ENCODE measurements at regions of chr22 and their contacts with region 1.

Region 1: DNA sequence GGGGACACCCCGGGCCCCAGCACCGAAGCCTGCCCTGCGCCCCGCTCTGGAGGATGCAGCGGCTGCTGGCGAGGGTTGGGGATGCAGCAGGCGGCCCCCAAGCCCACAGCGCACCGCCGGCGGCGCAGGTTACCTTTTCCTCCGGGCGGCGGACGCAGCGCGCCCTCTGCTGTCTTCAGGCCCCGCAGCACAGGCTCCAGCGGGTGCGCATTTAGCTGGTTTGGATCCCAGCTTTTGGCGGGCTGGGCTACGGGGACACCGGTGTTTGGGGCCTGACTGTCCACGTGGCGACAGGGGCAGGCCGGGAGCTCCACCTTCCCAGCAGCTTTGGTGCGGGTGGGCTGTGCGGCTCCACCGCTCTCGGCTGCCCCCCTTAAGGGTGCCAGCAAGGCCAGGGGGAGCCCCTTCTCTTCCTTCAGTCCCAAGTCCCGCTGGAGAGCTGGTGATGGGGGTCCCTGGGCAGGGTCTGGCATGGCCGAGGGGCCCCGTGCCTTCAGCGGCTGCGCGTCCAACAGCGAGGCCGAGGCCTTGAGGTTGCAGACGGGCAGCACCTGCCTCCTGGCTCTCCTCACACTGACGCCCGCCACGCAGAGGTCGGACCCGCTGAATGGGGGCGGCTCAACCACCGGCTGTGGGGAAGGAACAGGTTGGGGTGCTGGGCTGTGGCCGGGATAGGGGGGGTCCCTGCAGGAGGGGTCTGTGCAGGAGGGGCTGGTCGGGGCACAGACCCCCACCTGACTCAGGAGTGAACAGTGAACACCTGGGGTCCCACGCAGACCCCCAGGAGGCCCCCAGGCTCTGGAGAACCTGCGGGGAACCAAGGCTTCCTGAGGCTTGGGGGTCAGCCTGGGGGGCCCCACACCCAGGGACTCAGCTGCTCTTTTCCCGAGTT is 18.0 kb upstream of the IL17REL start:
- DNase-seq: peak; percentile 79
- H3K4me3 Mint-ChIP-seq: no peak overlapping the region
- H3K27ac Mint-ChIP-seq: no peak overlapping the region
- H3K4me1 Mint-ChIP-seq: peaks cover 11% of the 10 kb centered on the region
- H3K27me3 Mint-ChIP-seq: no peaks in the 10 kb centered on the region
- CTCF ChIP-seq: peak; percentile 91

Region 2: DNA sequence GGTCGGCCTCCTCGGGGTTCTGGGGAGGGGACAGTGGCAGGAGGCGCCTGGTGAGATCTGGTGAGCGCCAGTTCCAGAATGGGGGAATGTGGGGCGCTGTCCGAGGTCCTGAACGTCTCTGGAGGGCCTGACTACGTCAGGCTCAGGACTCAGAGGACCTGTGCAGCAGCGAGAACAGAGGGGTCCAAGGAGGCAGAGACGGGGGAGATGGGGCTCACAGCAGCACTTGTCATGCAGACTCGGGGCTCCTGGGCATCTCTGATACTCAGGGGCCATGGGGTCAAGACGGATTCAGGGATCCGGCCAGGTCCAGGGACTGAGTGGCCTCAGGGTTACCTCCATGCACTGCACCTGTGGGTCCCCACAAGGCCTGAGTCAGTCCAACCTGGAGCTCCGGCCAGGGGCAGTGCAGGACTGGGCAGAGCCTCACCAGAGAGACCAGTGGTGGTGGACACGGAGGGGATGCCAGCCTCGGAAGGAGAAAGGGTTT is 295.1 kb before region 1 on chr22:
- CTCF ChIA-PET with region 1: no interaction called
- POLR2A ChIA-PET with region 1: no interaction called
- intact Hi-C with region 1: no loop called
- DNase-seq: no peak
- H3K4me3 Mint-ChIP-seq: no peak overlapping the region
- H3K27ac Mint-ChIP-seq: no peak overlapping the region
- H3K4me1 Mint-ChIP-seq: no peaks in the 10 kb centered on the region
- H3K27me3 Mint-ChIP-seq: no peaks in the 10 kb centered on the region
- CTCF ChIP-seq: no peak

Region 3: GRCh38 chr22:49767355-49768062 is 263.0 kb before region 1 on chr22:
- CTCF ChIA-PET with region 1: no interaction called
- POLR2A ChIA-PET with region 1: interaction called, 4 read pairs
- intact Hi-C with region 1: loop called (anchors 2 kb)
- DNase-seq: peak; percentile 55
- H3K4me3 Mint-ChIP-seq: no peak overlapping the region
- H3K27ac Mint-ChIP-seq: no peak overlapping the region
- H3K4me1 Mint-ChIP-seq: no peaks in the 10 kb centered on the region
- H3K27me3 Mint-ChIP-seq: no peaks in the 10 kb centered on the region
- CTCF ChIP-seq: peak; percentile 65

Region 4: GRCh38 chr22:49930739-49931412 is 99.7 kb before region 1 on chr22:
- CTCF ChIA-PET with region 1: interaction called, 48 read pairs
- POLR2A ChIA-PET with region 1: interaction called, 12 read pairs
- intact Hi-C with region 1: no loop called
- DNase-seq: peak; percentile 83
- H3K4me3 Mint-ChIP-seq: no peak overlapping the region
- H3K27ac Mint-ChIP-seq: no peak overlapping the region
- H3K4me1 Mint-ChIP-seq: peaks cover 12% of the 10 kb centered on the region
- H3K27me3 Mint-ChIP-seq: no peaks in the 10 kb centered on the region
- CTCF ChIP-seq: peak; percentile 13

Region 5: DNA sequence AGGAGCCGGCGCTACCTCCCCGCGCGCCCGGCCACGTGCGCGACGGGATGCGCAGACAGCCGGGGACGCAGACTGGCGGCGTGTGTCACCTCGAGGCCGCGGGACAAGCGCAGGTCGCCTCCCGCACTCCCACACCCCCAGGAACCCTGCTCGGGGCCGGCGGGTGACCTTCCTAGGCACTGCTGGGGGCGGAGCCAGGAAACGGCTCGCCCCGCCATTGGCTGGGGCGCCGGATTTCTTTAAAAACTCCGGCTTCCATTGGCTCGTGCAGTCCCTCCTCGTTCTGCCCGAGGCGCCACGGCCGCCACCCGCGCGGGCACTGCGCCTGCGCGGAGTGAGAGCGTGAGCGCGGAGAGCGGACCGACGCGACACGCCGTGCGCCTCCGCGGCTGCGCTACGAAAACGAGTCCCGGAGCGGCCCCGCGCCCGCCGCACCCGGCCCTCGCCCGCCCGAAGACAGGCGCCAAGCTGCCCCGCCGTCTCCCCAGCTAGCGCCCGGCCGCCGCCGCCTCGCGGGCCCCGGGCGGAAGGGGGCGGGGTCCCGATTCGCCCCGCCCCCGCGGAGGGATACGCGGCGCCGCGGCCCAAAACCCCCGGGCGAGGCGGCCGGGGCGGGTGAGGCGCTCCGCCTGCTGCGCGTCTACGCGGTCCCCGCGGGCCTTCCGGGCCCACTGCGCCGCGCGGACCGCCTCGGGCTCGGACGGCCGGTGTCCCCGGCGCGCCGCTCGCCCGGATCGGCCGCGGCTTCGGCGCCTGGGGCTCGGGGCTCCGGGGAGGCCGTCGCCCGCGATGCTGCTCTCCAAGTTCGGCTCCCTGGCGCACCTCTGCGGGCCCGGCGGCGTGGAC is 70.2 kb before region 1 on chr22 and contains the start of gene PIM3:
- CTCF ChIA-PET with region 1: interaction called, 6 read pairs
- POLR2A ChIA-PET with region 1: interaction called, 25 read pairs
- intact Hi-C with region 1: no loop called
- DNase-seq: peak; percentile 96
- H3K4me3 Mint-ChIP-seq: peak within 1 kb of the TSS; percentile 90
- H3K27ac Mint-ChIP-seq: peak within 1 kb of the TSS; percentile 77
- H3K4me1 Mint-ChIP-seq: peaks cover 19% of the 10 kb centered on the region
- H3K27me3 Mint-ChIP-seq: no peaks in the 10 kb centered on the region
- CTCF ChIP-seq: no peak
- total RNA-seq, gene PIM3: 56.3 and 73.5 TPM in 2 replicates

Region 6: DNA sequence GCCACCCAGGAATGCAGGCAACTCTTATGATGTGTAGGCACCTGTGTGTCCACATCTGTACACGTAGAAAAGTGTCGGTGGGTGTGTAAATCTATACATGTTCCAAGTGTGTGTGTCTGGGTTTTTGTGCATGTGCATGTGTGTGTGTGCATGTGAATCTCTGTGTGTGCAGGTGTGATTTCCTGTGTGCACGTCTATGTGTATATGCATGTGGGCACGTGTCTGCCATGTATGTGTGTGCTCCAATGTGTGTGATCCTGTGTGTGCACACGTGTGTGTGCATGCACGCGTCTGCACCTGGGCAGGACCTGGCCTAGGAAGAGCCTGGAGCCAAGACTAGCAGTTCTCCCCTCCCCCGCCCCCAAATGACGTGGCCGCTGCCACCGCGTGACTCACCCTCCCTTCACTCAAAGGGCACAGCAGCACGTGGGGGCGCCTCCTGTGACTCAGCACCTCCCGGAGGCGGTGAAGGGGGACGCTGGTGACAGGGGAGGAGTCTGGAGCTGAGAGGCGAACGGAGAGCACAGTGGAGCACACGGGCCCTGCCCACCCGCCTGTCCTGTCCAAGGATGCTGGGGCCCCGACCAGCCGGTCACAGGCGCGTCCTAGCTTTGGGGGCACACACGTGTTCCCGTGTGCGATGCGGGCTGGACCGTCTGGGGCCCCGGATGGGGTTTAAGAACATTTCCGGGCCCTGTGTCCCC is 59.9 kb before region 1 on chr22:
- CTCF ChIA-PET with region 1: interaction called, 6 read pairs
- POLR2A ChIA-PET with region 1: interaction called, 5 read pairs
- intact Hi-C with region 1: loop called (anchors 5 kb)
- DNase-seq: peak; percentile 98
- H3K4me3 Mint-ChIP-seq: peak overlapping the region; percentile 69
- H3K27ac Mint-ChIP-seq: peak overlapping the region; percentile 72
- H3K4me1 Mint-ChIP-seq: peaks cover 15% of the 10 kb centered on the region
- H3K27me3 Mint-ChIP-seq: no peaks in the 10 kb centered on the region
- CTCF ChIP-seq: no peak

Region 7: DNA sequence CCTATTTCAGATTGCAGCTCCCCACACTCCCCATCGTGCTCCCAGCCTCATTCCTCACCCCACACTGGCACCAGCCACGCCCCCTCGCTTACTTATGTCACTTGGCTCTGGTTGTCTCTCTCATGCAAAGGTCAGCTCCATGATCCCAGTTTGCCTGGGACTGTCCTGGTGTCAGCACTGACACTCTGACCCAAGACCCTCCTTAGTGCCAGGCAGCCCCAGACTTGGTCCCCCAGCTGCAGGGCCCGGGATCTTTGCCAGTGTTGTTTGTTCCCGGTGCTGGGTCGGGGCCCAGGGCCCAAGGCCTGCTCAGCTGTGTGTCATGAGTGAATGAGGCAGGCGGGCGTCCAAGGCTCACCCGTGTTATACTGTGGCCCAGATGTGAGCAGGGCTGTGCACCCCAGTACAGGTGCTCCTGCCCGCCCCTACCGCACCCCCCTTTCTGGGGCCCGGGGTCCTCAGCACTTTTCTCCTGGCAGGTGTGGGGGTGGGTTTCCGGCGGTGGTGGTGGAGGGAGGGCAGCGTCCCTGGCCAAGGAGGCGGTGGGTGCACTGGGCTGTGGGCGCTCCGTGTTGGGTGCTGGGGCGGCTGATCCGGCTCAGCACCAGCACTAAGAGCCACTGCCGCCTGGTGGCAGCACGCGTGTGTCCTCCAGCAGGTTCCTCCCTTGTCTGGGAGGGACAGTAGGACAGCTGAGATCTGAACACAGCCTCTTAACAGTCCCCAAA is 37.5 kb before region 1 on chr22:
- CTCF ChIA-PET with region 1: interaction called, 9 read pairs
- POLR2A ChIA-PET with region 1: interaction called, 3 read pairs
- intact Hi-C with region 1: loop called (anchors 1 kb)
- DNase-seq: peak; percentile 65
- H3K4me3 Mint-ChIP-seq: no peak overlapping the region
- H3K27ac Mint-ChIP-seq: no peak overlapping the region
- H3K4me1 Mint-ChIP-seq: peaks cover 14% of the 10 kb centered on the region
- H3K27me3 Mint-ChIP-seq: peaks cover 14% of the 10 kb centered on the region
- CTCF ChIP-seq: peak; percentile 77

Region 8: DNA sequence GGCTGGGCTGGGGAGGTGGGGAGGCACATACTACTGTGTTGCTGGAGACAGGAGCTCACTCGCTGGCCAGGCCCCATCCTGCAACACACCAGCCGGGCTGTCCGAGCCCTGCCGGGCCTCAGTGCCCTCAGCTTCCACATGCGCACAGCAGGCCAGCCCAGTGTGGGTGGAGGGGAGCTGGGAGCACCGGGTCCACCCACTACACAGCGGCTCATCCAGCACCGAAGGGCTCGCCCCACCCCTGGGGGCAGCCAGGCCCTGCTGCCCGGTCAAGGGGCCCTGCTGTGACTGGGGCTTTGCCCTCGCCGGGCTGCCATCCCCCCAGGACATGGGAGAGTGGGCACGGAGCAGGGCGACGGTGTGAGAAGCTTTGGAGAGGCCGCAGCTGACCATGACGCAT is 18.3 kb after region 1 on chr22:
- CTCF ChIA-PET with region 1: interaction called, 10 read pairs
- POLR2A ChIA-PET with region 1: no interaction called
- intact Hi-C with region 1: no loop called
- DNase-seq: no peak
- H3K4me3 Mint-ChIP-seq: no peak overlapping the region
- H3K27ac Mint-ChIP-seq: no peak overlapping the region
- H3K4me1 Mint-ChIP-seq: no peaks in the 10 kb centered on the region
- H3K27me3 Mint-ChIP-seq: peaks cover 2% of the 10 kb centered on the region
- CTCF ChIP-seq: no peak

Measured in MCF 10A (cell line).